WTC11 (cell line): ENCODE measurements at regions of chr12 and their contacts with region 1.

Region 1: DNA sequence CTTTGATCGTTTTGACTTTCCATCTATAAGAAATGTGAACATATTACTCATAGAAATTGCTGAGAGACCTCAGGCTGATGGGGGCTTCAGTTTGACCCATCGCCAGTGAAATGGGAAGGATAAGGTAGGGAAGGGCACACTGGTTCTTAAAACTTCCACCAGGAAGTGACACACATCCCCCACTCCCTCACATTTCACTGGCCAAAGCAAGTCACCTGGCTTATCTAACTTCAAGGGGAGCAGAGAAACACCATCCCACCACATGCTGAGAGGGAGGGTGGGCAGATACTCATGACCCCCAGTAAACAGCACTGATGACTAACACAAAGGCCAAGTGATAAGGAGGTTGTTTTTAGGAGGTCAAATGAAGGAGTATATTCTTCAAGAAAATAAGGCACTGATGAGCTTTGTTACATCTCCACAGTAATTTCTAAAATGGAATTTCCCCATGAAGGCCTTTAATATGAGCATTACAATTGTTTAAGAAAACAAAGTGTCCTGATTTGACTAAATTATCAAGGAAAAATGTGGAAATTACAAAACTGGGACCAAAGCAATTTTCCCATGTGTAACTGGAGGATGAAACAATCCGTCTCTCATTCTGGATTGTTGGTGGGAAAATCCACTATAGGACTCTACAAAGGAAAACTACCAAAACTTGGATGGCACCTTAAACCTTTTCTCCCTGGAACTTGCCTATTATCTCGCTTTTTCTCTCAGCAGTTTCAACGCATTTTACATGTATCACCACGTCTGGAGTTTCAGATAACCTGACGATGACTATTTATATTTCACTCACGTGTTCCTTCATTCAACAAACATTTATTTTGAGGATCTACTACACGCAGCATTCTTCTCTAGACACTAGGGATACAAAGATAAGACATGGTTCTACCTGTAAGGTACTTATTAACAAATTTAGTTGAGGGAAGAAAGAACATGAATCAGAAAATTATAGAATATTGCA is 91.8 kb upstream of the EEA1 start:
- DNase-seq: no peak
- ATAC-seq: no peak
- H3K4me3 Mint-ChIP-seq: no peak overlapping the region
- H3K27ac Mint-ChIP-seq: no peak overlapping the region
- H3K4me1 Mint-ChIP-seq: peaks cover 12% of the 10 kb centered on the region
- H3K27me3 Mint-ChIP-seq: no peaks in the 10 kb centered on the region
- CTCF ChIP-seq: no peak

Region 2: DNA sequence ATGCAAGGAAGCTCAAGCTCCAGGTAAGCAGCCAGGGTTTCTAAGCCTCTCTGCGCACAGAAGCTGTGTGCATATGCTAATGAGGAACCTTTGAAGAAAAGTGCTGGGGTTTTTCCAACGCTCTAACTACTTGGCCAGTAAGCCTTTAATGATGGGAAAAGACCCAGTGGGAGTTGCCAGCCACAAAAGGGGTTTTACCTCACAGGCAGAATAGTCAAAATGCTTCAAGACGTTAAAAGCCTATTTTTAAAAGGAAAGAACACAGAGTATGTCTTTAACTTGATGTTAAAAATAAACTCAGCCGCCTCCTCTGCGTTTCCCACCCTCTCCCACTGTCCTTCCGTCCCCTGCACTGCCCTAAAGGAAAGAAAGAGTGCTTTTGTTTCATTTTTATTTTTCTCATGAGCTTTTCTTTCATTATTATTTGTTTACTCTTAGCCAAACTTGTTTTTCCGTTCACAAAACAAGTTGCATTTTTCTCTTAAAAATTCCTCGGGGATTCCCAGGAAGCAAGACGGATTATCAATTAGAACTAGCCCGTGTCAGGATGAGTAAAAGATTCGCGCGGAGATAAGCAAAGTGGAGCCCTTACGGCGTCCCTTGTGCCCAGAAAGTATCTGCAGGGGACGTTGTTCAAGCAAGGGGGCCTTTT is 147.1 kb after region 1 on chr12:
- CTCF ChIA-PET with region 1: no interaction called
- POLR2A ChIA-PET with region 1: interaction called, 10 read pairs
- DNase-seq: peak; percentile 28
- ATAC-seq: peak; percentile 91
- H3K4me3 Mint-ChIP-seq: peak overlapping the region; percentile 62
- H3K27ac Mint-ChIP-seq: no peak overlapping the region
- H3K4me1 Mint-ChIP-seq: peaks cover 21% of the 10 kb centered on the region
- H3K27me3 Mint-ChIP-seq: peaks cover 59% of the 10 kb centered on the region
- CTCF ChIP-seq: no peak